ENCODE measurements at regions of chr22 and their contacts with region 1.

Region 1: DNA sequence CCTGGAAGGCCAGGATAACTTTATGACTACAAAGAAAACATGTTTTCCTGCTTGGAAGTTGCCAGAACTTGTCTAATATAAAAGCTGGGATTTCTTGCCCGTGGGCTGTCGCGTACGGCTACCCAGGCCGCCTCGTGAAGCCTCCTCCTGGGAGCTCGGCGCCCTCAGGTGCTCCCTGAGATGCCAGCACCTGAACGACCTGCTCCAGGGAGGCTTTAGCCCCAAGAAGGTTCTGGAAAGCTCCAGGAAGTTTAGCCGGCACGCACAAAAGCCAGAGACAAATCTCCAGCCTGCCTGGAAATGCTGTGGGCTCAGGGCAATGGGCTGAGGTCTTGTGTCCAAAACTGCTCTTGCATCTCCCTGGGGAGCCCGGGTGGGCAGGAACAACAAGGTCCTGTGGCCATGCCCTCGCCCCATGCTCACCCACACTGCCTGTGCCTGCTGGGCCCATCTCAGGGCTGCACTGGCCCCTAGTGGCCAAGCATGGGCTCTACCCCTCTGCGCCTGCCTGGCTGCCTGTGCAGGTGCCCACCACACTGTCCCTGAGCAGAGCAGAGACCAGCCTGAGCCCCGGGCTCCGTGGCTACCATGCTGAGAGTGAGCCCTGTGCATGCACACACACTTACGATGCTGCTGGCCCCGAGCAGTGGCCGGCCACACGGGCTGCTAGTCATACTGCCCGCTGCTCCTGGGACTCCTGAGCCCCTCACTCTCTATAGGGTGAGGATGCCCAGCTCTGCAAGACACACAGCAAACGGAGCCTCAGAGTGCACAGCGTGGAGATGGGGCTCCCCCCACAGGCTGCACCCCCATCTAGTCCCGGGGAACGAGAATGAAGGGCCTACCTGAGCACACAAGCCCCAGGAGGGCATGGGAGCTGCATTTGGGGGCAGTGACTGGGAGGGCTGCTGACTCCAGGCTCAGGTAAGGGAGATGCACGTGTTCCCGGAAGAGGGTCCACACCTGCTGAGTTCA is 4.9 kb upstream of the CELSR1 start:
- DNase-seq: peak; percentile 59 to 97 (median 74)

Region 2: GRCh38 chr22:45994491-45995404 is 547.5 kb before region 1 on chr22:
- intact Hi-C with region 1: loop called (anchors 10 kb)
- DNase-seq: peak; percentile 72 to 98 (median 90)

Region 3: GRCh38 chr22:46122511-46122971 is 419.8 kb before region 1 on chr22:
- intact Hi-C with region 1: loop called (anchors 1 kb)
- DNase-seq: peak in 9 of 10 donors; percentile 64 to 96 (median 77)

Region 4: GRCh38 chr22:46355371-46355995 is 186.8 kb before region 1 on chr22:
- intact Hi-C with region 1: loop called (anchors 1 kb)
- DNase-seq: peak in 9 of 10 donors; percentile 51 to 95 (median 78)